ENCODE measurements at regions of chr1 and their contacts with region 1.

Region 1: GRCh38 chr1:204398217-204399081 is 13.2 kb downstream of the PPP1R15B start:
- DNase-seq: no peak
- H3K4me3 ChIP-seq: no peak overlapping the region
- H3K27me3 ChIP-seq: no peaks in the 10 kb centered on the region
- CTCF ChIP-seq: peak; percentile 87

Region 2: GRCh38 chr1:204213668-204214662 is 184.5 kb before region 1 on chr1 and contains the start of gene GOLT1A:
- CTCF ChIA-PET with region 1: interaction called, 20 read pairs
- POLR2A ChIA-PET with region 1: no interaction called
- DNase-seq: peak; percentile 32
- H3K4me3 ChIP-seq: no peak within 1 kb of the TSS
- H3K27me3 ChIP-seq: no peaks in the 10 kb centered on the region
- CTCF ChIP-seq: peak; percentile 87
- polyA plus RNA-seq, gene GOLT1A: 0.21 TPM in 2 replicates

Region 3: GRCh38 chr1:204274446-204274845 is 124.0 kb before region 1 on chr1:
- CTCF ChIA-PET with region 1: no interaction called
- POLR2A ChIA-PET with region 1: no interaction called
- DNase-seq: no peak
- H3K4me3 ChIP-seq: no peak overlapping the region
- H3K27me3 ChIP-seq: peaks cover 10% of the 10 kb centered on the region
- CTCF ChIP-seq: no peak

Region 4: DNA sequence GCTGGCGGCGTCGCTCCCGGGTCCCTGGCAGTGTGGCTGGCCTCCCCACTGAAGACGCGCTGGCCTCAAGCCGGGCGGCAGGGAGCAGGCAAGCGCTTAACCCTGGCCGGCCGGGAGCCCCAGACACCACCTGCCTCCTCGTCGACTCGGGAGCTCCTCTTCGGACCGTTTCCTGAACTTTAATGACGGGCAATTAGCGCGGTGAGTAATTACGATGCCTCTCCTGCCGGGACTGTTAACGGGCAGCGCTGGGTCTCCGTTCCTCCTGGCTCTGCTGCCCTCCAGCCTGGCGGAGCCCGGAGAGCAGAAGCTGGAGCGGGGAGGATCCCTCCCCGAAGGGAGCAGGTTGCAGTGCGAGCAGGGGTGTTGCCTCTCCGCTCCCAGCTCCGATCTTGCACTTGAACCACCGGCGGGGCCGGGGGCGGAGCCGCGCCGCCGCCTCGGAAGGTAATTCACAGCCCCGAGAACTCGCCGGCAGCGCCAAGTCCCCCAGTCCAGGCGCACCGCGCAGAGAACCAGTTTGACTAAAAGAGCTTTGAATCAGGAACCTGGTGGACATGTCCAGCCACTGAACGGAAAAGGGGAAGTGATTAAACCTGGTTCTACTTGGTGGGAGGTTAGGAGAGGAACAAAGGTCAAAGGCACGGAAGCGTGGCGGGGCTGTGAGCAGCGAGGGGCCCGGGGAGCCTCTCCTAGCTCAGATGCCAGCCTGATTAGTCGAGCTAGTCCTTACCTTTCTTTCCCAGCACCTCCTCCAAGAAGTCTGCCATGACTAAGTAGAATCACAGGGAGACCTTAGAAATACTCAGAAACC is 20.4 kb before region 1 on chr1:
- CTCF ChIA-PET with region 1: interaction called, 21 read pairs
- POLR2A ChIA-PET with region 1: no interaction called
- DNase-seq: no peak
- H3K4me3 ChIP-seq: peak overlapping the region; percentile 46
- H3K27me3 ChIP-seq: peaks cover 32% of the 10 kb centered on the region
- CTCF ChIP-seq: no peak

Region 5: GRCh38 chr1:204411451-204412204 is 13.2 kb after region 1 on chr1 and contains the start of gene PPP1R15B:
- CTCF ChIA-PET with region 1: interaction called, 59 read pairs
- POLR2A ChIA-PET with region 1: interaction called, 6 read pairs
- DNase-seq: peak; percentile 94
- H3K4me3 ChIP-seq: peak within 1 kb of the TSS; percentile 72
- H3K27me3 ChIP-seq: no peaks in the 10 kb centered on the region
- CTCF ChIP-seq: no peak
- polyA plus RNA-seq, gene PPP1R15B: 24.6 and 30.2 TPM in 2 replicates

Region 6: GRCh38 chr1:204494281-204495077 is 96.0 kb after region 1 on chr1 and contains the start of gene PIK3C2B:
- CTCF ChIA-PET with region 1: interaction called, 21 read pairs
- POLR2A ChIA-PET with region 1: no interaction called
- DNase-seq: no peak
- H3K4me3 ChIP-seq: peak within 1 kb of the TSS; percentile 64
- H3K27me3 ChIP-seq: peaks cover 3% of the 10 kb centered on the region
- CTCF ChIP-seq: peak; percentile 53
- polyA plus RNA-seq, gene PIK3C2B: 5.1 and 7.9 TPM in 2 replicates

Region 7: GRCh38 chr1:204915861-204916495 is 517.5 kb after region 1 on chr1:
- CTCF ChIA-PET with region 1: no interaction called
- POLR2A ChIA-PET with region 1: no interaction called
- DNase-seq: no peak
- H3K4me3 ChIP-seq: no peak overlapping the region
- H3K27me3 ChIP-seq: no peaks in the 10 kb centered on the region
- CTCF ChIP-seq: no peak